ENCODE measurements at regions of chr20 and their contacts with region 1.

Region 1: DNA sequence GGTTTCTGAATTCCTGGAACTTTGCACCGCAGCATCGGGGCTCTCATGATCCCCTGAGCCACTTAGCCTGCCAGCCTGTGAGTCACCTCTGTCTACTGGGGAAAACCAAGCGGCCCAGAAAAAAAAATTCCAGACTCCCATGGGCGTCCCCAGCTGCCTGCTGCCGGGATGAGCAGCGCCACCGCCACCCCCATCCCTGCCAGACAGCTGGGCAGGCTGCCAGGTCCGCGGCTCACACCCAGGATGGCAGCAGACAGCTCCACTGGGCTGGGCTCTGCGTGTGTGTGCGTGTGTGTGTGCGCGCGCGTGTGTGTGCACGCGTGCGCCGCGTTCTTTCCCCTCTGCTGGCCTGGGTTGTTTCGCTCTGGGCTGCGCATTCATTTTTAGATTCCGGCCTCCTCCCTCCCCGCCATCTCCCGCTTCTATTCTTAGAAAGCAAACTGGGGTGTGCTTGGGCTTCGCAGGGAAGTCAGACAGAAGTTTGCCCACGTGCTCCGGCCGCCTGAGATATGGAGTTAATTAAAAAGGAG is 38.9 kb upstream of the PMEPA1 start:
- DNase-seq: peak; percentile 90
- H3K4me3 Mint-ChIP-seq: peak overlapping the region; percentile 67
- H3K27ac Mint-ChIP-seq: peak overlapping the region; percentile 42
- H3K4me1 Mint-ChIP-seq: peaks cover 12% of the 10 kb centered on the region
- H3K27me3 Mint-ChIP-seq: no peaks in the 10 kb centered on the region
- CTCF ChIP-seq: no peak

Region 2: DNA sequence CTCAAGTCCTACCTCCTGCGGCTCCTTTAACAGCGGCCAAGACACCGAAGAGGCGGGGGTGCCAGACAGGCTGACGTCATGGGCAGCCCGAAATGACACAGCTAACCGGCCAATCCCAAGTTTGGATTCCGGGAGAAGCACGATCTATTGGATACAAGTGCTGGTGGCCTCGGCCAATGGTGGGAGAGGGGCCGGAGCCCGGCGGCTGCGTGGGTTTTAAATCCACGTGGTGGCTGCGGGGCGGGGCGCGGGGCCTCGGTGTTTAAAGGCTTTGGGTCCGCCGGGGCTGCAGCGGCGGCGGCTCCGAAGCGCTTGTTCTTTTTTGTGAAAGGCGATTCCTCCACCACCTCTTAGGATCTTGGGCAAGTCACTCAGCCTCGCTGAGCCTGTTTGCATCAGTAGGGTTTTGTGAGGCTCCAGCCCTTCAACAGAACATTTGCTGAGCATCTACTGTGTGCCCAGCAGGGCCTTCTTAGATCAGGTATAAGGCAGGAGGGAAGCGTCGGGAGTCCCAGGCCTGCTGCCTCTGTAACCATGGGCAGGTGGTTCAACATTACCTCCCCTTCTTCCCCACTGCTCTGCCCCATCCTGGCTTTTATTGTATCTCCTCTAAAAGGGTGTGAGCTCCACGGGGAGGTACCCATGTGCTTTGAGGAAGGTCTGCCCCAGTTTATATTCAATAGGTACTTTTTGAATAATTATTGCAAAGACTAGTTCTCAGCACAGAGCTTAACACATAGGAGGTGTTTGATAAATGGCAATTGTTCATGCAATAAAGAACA is 30.0 kb before region 1 on chr20:
- CTCF ChIA-PET with region 1: no interaction called
- POLR2A ChIA-PET with region 1: interaction called, 5 read pairs
- intact Hi-C with region 1: loop called (anchors 2 kb)
- DNase-seq: peak; percentile 98
- H3K4me3 Mint-ChIP-seq: peak overlapping the region; percentile 68
- H3K27ac Mint-ChIP-seq: no peak overlapping the region
- H3K4me1 Mint-ChIP-seq: peaks cover 29% of the 10 kb centered on the region
- H3K27me3 Mint-ChIP-seq: peaks cover 11% of the 10 kb centered on the region
- CTCF ChIP-seq: no peak

Region 3: DNA sequence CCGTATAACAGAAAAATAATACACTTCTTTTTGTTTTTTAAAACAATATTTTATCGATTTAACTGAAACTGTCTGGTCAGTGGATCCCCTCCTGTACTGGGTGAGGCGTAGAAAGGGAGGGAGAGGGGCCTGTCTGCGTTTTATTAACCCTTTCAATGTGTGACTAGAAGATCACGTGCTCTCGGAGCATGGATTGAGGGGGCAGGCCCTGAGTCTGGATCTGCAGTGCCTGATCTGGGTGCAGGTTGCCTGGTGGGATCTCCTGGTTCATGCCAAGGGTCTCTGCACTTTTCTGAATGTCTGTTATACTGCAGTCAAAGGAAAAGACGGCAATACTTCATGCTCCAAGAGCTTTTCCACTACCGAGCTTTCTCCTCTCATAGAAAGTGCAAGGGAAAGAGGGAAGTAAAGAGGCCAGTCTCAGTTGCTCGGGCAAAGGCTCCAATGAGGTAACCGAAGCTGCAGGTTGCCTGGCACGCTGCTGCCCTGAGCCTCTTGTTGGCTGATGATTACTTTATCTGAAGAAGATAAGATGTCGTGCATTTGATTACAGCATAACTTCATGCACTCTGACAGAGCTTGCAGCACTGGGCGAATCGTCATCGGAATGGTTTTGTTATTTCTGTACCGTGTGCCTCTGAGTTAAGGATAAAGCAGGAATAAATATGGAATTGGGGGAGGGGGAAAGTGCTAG is 128.6 kb after region 1 on chr20:
- CTCF ChIA-PET with region 1: no interaction called
- POLR2A ChIA-PET with region 1: no interaction called
- intact Hi-C with region 1: no loop called
- DNase-seq: no peak
- H3K4me3 Mint-ChIP-seq: no peak overlapping the region
- H3K27ac Mint-ChIP-seq: no peak overlapping the region
- H3K4me1 Mint-ChIP-seq: peaks cover 1% of the 10 kb centered on the region
- H3K27me3 Mint-ChIP-seq: peaks cover 69% of the 10 kb centered on the region
- CTCF ChIP-seq: no peak